Heart right ventricle (tissue), 16 donors: ENCODE measurements at regions of chr11 and their contacts with region 1.

Region 1: GRCh38 chr11:42098075-42098474 is 638.6 kb upstream of the LRRC4C start:
- DNase-seq: no peak
- ATAC-seq: no peak
- H3K4me3 ChIP-seq: no peak overlapping the region
- H3K27ac ChIP-seq: no peak overlapping the region
- H3K4me1 ChIP-seq: no peaks in the 10 kb centered on the region
- H3K27me3 ChIP-seq: no peaks in the 10 kb centered on the region
- CTCF ChIP-seq: no peak

Region 2: GRCh38 chr11:42036201-42036600 is 61.9 kb before region 1 on chr11:
- intact Hi-C with region 1: loop called in 1 of 10 experiments (anchors 10 kb)
- DNase-seq: no peak
- ATAC-seq: no peak
- H3K4me3 ChIP-seq: no peak overlapping the region
- H3K27ac ChIP-seq: no peak overlapping the region
- H3K4me1 ChIP-seq: no peaks in the 10 kb centered on the region
- H3K27me3 ChIP-seq: no peaks in the 10 kb centered on the region
- CTCF ChIP-seq: no peak